ENCODE measurements at regions of chr17 and their contacts with region 1.

Region 1: DNA sequence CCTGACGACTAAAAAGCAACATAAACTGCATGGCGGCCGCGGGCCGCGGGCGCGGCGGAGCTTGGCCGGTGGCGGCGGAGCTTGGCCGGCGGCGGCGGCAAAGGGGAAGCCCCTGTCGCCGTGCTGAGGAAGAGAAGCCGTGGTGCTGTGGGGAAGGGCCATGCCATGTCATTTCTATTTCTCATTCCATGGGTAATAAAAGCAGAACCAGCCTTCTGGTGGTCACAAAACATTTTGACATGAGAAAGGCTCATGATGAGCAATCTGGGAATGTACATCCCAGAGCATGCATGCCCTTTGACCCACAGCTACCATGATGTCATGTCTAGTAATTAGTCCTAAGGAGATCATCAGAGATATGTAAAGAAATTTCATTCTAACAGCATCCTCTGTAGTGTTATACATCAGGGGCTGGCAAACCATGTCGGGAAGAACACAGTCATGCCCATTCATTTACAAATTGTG is 23.9 kb upstream of the HEATR6 start:
- DNase-seq: no peak
- ATAC-seq: peak; percentile 85
- H3K4me3 ChIP-seq: peak overlapping the region; percentile 17 to 36; a peak in 3 of 4 replicates
- H3K27ac ChIP-seq: no peak overlapping the region; the same call in 1 of the 2 replicates
- H3K4me1 ChIP-seq: no peaks in the 10 kb centered on the region
- H3K27me3 ChIP-seq: no peaks in the 10 kb centered on the region
- CTCF ChIP-seq: no peak

Region 2: GRCh38 chr17:60421273-60421934 is 318.7 kb after region 1 on chr17:
- CTCF ChIA-PET with region 1: no interaction called
- POLR2A ChIA-PET with region 1: no interaction called
- in situ Hi-C with region 1: no loop called
- intact Hi-C with region 1: loop called (anchors 10 kb)
- DNase-seq: peak; percentile 12
- ATAC-seq: peak; percentile 98
- H3K4me3 ChIP-seq: peak overlapping the region; percentile 35 to 40
- H3K27ac ChIP-seq: peak overlapping the region; percentile 48; the same call in 1 of the 2 replicates
- H3K4me1 ChIP-seq: peaks cover 3% of the 10 kb centered on the region; the same call in 1 of the 2 replicates
- H3K27me3 ChIP-seq: no peaks in the 10 kb centered on the region
- CTCF ChIP-seq: peak; percentile 97